ENCODE measurements at regions of chr14 and their contacts with region 1.

Region 1: DNA sequence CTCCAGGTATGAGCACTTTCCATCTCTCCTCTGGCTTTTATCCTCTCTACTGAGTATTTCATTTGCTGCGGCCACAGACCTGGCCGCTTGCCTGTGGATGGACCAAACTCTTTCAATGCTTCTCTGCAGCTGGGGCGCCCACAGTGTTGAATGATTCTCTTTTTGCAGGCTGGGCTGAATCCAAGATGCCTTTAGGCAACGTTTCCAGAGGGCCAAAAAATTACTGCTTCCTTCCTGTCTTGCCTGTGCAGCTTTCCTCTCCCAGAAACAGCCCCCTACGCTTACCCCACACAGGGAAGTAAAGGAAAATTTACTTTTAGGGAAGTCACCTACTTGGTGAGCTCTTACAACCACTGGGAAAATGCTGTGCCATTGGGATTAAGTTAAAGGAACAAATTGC is 55.6 kb upstream of the JDP2 start:
- DNase-seq: no peak
- H3K4me3 ChIP-seq: no peak overlapping the region
- H3K4me3 Mint-ChIP-seq: no peak overlapping the region
- H3K27ac ChIP-seq: no peak overlapping the region
- H3K27ac Mint-ChIP-seq: peak overlapping the region in 1 of 7 donors; percentile 58
- H3K4me1 ChIP-seq: peaks cover 23 to 29% of the 10 kb centered on the region in 2 donors
- H3K4me1 Mint-ChIP-seq: peaks cover 28% of the 10 kb centered on the region
- H3K27me3 ChIP-seq: no peaks in the 10 kb centered on the region
- H3K27me3 Mint-ChIP-seq: peaks cover 0 to 7% (median 3%) of the 10 kb centered on the region in 3 donors
- CTCF ChIP-seq: no peak

Region 2: DNA sequence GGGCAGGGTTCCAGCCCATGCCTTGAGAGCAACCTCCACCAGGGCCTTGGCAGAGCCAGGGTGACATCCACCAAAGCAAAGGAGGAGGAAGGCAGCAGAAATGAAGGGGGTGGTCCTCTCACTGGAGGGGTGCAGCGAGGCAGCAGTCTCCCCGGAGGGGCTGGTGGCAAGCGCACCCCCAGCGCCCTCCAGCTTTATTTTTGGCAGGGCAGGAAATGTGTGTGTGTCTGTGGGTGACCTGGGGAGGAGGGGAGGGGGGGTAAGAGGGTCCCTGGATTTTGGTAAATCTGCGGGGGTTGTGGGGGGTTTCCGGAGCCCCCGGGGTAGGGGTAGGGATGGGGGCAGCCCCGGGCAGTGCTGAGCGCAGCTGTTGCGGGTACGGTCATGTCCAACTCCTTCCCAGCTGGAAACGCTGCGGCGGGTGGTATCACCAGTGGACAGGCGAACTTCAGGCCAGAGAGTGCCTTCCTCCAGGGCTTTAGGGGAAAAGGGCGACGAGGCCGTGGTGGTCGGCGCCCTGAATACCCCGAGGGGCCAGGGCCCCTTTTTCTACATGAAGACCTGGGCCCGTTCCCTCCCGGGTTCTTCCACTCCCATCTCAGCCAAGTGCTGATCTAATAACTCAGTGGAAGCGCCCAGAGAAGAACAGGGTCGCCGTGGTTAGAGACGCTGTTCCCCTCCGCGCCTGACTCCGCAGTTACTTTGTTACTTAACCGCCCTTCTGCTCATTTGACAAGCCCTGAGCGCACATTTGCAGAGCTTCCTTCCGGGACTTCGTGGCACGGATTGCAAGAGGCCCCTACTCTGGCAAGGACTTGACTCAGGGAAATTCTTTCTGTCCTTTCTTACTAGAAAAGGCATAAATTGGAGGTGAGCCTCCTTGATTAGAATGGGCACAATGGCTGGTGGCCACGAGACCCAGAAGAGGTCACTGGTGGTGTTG is 38.4 kb before region 1 on chr14:
- intact Hi-C with region 1: loop called in 1 of 2 experiments (anchors 5 kb)
- DNase-seq: peak; percentile 81 to 85 (median 83)
- H3K4me3 ChIP-seq: peak overlapping the region; percentile 44 to 71 (median 48)
- H3K4me3 Mint-ChIP-seq: peak overlapping the region; percentile 86 to 94
- H3K27ac ChIP-seq: peak overlapping the region; percentile 98 to 99
- H3K27ac Mint-ChIP-seq: peak overlapping the region; percentile 96 to 99 (median 98)
- H3K4me1 ChIP-seq: peaks cover 79 to 84% of the 10 kb centered on the region in 2 donors
- H3K4me1 Mint-ChIP-seq: peaks cover 75% of the 10 kb centered on the region
- H3K27me3 ChIP-seq: no peaks in the 10 kb centered on the region
- H3K27me3 Mint-ChIP-seq: peaks cover 0 to 3% (median 2%) of the 10 kb centered on the region in 3 donors
- CTCF ChIP-seq: no peak